GM10248 (cell line): ENCODE measurements at regions of chr15 and their contacts with region 1.

Region 1: DNA sequence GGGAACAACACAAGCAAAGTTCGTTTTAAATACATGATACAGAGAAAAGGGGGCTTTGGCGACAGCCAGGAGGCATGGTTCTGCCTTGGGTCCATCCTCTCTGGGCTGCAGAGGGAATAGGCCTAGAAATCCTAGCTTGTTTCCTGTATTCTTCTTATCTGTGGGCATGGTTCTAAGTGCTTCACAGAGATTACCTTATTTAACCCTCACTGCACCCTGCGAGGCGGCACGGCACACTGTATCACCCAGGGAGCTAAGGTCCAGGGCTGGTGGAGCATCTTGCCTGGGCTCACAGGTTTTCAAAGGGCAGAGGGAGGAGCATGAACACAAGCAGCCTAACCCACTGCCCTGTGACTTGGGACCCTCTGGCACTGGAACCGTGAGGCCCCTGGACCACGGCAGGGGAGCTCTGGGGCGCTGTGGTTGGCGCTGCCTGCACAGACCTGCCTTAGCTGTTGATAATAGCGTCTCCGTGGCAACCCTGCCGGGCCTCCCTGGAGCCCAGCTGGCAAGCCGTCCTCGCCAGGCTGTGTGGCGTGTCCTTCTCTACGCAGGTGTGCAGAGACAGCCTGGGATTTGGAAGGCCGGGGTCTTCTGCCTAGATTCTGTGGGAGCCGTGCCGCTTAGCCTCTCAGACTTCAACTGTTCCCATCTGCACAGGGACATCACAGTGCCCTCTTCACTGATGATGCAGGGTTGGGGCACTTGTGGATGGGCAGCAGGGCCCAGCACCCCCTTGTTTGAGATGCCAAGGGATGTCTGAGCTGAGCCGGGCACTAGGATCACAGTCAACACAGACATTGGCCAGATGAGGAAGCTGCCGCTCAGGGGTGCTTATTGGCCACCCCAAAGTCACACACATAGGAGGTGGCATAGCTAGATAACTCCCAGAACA is 154.6 kb upstream of the TLE3 start:
- DNase-seq: no peak
- CTCF ChIP-seq: no peak

Region 2: DNA sequence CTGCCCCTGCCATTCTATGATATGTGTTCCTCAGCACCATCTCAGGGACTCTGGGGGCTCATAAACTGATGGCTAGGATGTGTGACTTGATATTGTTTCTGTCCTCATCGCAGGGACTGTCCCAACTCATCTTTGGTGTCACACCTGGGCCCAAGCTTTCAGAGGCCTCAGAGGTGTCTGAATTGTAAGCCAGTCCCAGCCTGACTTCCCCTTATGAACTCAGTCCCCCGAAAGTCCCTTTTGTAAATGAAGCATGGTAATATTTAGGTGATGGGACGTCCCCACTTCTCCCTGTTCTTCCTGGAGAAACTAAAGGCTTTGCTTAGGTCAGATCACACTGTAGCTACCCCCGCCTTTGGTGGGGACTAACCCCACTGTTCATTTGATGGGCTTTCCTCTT is 12.2 kb before region 1 on chr15:
- CTCF ChIA-PET with region 1: interaction called, 12 read pairs
- POLR2A ChIA-PET with region 1: interaction called, 3 read pairs
- DNase-seq: peak; percentile 78
- CTCF ChIP-seq: no peak

Region 3: DNA sequence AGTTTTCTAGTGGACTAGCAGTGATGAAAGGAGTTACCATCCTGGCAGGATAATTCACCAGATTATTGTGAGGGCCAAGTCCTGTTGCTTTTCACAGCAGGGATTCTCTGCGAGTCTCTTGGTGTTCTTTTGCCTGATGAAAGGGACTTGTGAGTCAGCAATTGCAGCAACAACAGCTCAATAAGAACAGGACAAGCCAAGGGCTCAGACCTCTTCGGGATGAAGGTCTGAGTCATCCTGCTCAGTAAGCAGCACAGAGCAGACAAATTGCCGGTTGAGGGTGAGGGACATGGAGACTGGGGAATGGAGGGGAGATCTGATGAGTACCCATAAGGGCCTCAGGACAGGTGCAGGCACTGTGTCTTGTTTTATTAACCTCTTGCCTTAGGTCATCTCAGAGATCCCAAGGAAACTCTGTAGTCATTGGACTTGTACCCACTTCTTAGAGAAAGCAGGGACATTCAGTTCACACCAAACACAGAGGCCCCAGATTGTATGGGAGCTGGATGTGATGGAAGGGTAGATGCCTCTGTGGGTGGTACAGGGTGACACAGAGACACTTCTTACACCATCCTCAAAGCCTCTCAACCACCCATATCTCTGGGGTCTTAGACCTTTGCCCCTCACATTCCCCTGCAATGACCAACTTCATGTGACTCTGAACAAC is 19.3 kb after region 1 on chr15:
- CTCF ChIA-PET with region 1: interaction called, 12 read pairs
- POLR2A ChIA-PET with region 1: interaction called, 5 read pairs
- DNase-seq: no peak
- CTCF ChIP-seq: no peak